ENCODE measurements at regions of chr7 and their contacts with region 1.

Region 1: GRCh38 chr7:100852048-100852872 is at the start of gene SLC12A9:
- DNase-seq: peak; percentile 85 to 95 (median 88)
- ATAC-seq: peak; percentile 98 to 100 (median 100)
- H3K4me3 ChIP-seq: peak within 1 kb of the TSS; percentile 34 to 67 (median 57)
- H3K27ac ChIP-seq: peak within 1 kb of the TSS in 3 of 4 donors; percentile 10 to 31 (median 13)
- H3K4me1 ChIP-seq: peaks cover 0 to 9% (median 0%) of the 10 kb centered on the region in 3 donors
- H3K27me3 ChIP-seq: no peaks in the 10 kb centered on the region
- CTCF ChIP-seq: peak; percentile 55 to 86 (median 80)
- total RNA-seq, gene SLC12A9: 11.9 to 20.8 (median 13.9) TPM

Region 2: DNA sequence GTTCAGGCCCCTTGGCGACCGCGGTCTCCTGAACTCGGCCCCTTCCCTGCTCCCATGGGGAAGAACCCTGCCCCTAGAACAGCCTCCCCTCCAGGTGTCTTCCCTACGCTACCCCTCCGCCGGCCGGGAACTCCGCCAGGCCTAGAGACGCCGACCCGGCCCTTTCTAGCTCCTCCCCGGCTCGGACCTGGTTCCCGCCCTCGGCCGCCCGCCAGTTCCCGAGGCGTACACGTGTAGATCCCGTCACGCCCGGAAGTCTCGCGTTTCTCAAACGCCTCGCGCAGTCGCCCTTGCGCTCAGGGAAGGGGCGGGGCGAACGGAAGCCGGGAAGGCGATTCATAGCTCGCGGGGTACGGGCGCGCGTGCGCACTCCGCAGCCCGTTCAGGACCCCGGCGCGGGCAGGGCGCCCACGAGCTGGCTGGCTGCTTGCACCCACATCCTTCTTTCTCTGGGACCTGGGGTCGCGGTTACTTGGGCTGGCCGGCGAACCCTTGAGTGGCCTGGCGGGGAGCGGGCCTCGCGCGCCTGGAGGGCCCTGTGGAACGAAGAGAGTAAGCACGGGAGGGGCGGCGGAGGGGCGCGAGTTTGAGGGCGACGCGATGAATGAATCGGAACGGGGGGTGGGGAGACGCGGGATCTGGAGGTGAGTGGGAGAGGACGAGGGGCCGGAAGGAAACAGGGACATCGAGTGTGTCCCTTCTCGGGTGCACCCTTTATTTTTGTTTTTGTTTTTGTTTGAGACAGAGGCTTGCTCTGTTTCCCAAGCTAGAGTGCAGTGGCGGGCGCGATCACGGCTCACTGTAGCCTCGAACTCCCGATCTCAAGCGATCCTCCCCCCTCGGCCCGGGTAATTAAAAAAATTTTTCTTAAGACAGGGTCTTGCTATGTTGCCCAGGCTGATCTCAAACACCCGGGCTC is 146.2 kb before region 1 on chr7 and contains the start of gene POP7:
- intact Hi-C with region 1: loop called in 1 of 3 experiments (anchors 10 kb)
- DNase-seq: peak; percentile 98 to 100 (median 99)
- ATAC-seq: peak; percentile 94 to 98 (median 96)
- H3K4me3 ChIP-seq: peak within 1 kb of the TSS; percentile 71 to 85 (median 78)
- H3K27ac ChIP-seq: peak within 1 kb of the TSS; percentile 58 to 87 (median 84)
- H3K4me1 ChIP-seq: peaks cover 0 to 11% (median 6%) of the 10 kb centered on the region in 3 donors
- H3K27me3 ChIP-seq: no peaks in the 10 kb centered on the region
- CTCF ChIP-seq: no peak
- total RNA-seq, gene POP7: 10.5 to 19.2 (median 13.8) TPM

Region 3: DNA sequence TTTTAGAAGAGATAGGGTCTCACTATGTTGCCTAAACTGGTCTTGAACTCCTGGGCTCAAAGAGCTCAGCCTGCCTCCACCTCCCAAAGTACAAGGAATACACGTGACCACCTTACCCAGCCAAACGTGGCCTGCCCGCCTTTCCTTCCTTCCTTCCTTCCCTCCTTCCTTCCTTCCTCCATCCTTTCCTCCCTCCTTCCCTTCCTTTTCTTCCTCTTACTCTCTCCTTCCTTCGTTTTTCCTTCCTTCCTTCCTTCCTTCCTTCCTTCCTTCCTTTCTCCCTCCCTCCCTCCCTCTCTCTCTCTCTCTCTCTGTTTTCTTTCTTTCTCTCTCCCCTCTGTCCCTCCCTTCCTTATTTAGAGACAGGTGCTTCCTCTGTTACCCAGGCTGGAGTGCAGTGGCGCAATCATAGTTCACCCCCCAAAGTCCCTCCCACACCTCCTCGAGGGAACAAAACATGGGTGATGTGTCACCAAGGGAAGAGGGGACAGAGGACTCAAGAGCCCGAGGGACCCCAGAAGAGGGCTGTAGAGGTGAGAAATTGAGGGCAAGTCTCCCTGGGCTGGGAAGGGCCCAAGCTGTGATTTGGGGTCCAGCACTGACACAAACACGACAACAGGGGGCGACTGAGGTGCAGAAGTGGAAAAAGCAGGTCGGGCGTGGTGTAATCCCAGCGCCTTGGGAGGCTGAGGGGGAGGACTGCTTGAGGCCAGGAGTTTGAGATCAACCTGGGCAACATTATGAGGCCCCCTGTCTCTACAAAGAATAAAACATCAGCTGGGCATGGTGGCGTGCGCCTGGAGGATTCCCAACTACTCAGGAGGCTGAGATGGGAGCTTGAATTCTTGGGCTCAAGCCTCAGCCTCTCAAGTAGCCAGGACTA is 53.0 kb before region 1 on chr7:
- intact Hi-C with region 1: loop called in 2 of 3 experiments (anchors 5 kb)
- DNase-seq: peak; percentile 66 to 84 (median 76)
- ATAC-seq: peak; percentile 27 to 64 (median 58)
- H3K4me3 ChIP-seq: no peak overlapping the region
- H3K27ac ChIP-seq: no peak overlapping the region
- H3K4me1 ChIP-seq: peaks cover 17 to 25% (median 23%) of the 10 kb centered on the region in 3 donors
- H3K27me3 ChIP-seq: no peaks in the 10 kb centered on the region
- CTCF ChIP-seq: peak; percentile 49 to 67 (median 60)

Region 4: GRCh38 chr7:101201695-101202604 is 349.7 kb after region 1 on chr7:
- intact Hi-C with region 1: no loop called
- DNase-seq: peak in 1 of 6 donors; percentile 70
- ATAC-seq: peak; percentile 60 to 84 (median 70)
- H3K4me3 ChIP-seq: peak overlapping the region in 2 of 4 donors; percentile 18 to 39
- H3K27ac ChIP-seq: no peak overlapping the region
- H3K4me1 ChIP-seq: peaks cover 0 to 3% (median 0%) of the 10 kb centered on the region in 3 donors
- H3K27me3 ChIP-seq: peaks cover 0 to 2% (median 0%) of the 10 kb centered on the region in 4 donors
- CTCF ChIP-seq: no peak